Activated B cell treated with CpG ODN at 0.5 μM for 24 hours (primary cell): ENCODE measurements at regions of chr1 and their contacts with region 1.

Region 1: DNA sequence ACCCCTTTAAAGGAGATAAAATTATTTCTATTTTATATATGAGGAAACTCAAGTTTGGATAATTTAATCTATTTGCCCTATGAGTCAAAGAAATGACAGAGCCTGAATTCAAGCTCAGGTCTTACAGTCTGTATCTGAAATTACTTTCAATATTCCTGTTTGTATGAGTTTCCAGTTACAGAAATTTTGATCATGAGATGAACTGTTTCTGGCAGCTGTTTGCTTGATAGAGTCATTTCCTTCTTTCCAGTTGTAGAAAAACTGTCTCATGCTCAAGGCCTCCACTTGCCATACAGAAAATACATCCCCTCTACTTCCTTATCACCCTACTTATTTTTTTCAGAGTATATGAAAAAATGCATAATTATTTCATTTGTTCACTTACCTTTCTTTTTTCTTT is 87.6 kb downstream of the PTPRC start:
- DNase-seq: no peak
- ATAC-seq: no peak
- H3K4me3 Mint-ChIP-seq: no peak overlapping the region
- H3K27ac Mint-ChIP-seq: peak overlapping the region; percentile 46
- H3K4me1 Mint-ChIP-seq: peaks cover 9% of the 10 kb centered on the region
- H3K27me3 Mint-ChIP-seq: no peaks in the 10 kb centered on the region
- CTCF ChIP-seq: no peak

Region 2: GRCh38 chr1:198408716-198409115 is 317.7 kb before region 1 on chr1:
- CTCF ChIA-PET with region 1: no interaction called
- POLR2A ChIA-PET with region 1: no interaction called
- intact Hi-C with region 1: no loop called
- DNase-seq: no peak
- ATAC-seq: no peak
- H3K4me3 Mint-ChIP-seq: no peak overlapping the region
- H3K27ac Mint-ChIP-seq: no peak overlapping the region
- H3K4me1 Mint-ChIP-seq: no peaks in the 10 kb centered on the region
- H3K27me3 Mint-ChIP-seq: no peaks in the 10 kb centered on the region
- CTCF ChIP-seq: no peak

Region 3: GRCh38 chr1:198686069-198686728 is 40.3 kb before region 1 on chr1:
- CTCF ChIA-PET with region 1: no interaction called
- POLR2A ChIA-PET with region 1: no interaction called
- intact Hi-C with region 1: no loop called
- DNase-seq: no peak
- ATAC-seq: no peak
- H3K4me3 Mint-ChIP-seq: peak overlapping the region; percentile 33
- H3K27ac Mint-ChIP-seq: peak overlapping the region; percentile 72
- H3K4me1 Mint-ChIP-seq: peaks cover 87% of the 10 kb centered on the region
- H3K27me3 Mint-ChIP-seq: no peaks in the 10 kb centered on the region
- CTCF ChIP-seq: no peak

Region 4: GRCh38 chr1:198713081-198713480 is 13.4 kb before region 1 on chr1:
- CTCF ChIA-PET with region 1: no interaction called
- POLR2A ChIA-PET with region 1: no interaction called
- intact Hi-C with region 1: loop called (anchors 2 kb)
- DNase-seq: no peak
- ATAC-seq: no peak
- H3K4me3 Mint-ChIP-seq: no peak overlapping the region
- H3K27ac Mint-ChIP-seq: peak overlapping the region; percentile 63
- H3K4me1 Mint-ChIP-seq: peaks cover 4% of the 10 kb centered on the region
- H3K27me3 Mint-ChIP-seq: no peaks in the 10 kb centered on the region
- CTCF ChIP-seq: no peak

Region 5: DNA sequence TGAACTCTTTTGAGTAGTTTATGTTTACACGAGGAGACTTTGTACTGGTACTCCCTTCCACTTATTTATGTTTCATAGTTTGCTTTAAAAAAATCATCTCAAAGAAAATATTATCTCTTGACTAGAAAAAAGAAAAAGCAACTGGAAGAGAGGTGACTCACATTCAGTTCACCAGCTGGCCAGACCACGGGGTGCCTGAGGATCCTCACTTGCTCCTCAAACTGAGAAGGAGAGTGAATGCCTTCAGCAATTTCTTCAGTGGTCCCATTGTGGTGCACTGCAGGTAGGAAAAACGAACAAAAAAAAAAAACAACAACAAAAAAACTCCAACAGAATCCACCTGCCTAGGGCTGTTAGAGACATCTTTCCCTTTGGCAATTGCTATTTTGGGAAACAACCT is 15.3 kb after region 1 on chr1:
- CTCF ChIA-PET with region 1: no interaction called
- POLR2A ChIA-PET with region 1: interaction called, 4 read pairs
- intact Hi-C with region 1: loop called (anchors 1 kb)
- DNase-seq: no peak
- ATAC-seq: no peak
- H3K4me3 Mint-ChIP-seq: no peak overlapping the region
- H3K27ac Mint-ChIP-seq: peak overlapping the region; percentile 24
- H3K4me1 Mint-ChIP-seq: peaks cover 4% of the 10 kb centered on the region
- H3K27me3 Mint-ChIP-seq: no peaks in the 10 kb centered on the region
- CTCF ChIP-seq: no peak